Panc1 (cell line): ENCODE measurements at regions of chr7 and their contacts with region 1.

Region 1: DNA sequence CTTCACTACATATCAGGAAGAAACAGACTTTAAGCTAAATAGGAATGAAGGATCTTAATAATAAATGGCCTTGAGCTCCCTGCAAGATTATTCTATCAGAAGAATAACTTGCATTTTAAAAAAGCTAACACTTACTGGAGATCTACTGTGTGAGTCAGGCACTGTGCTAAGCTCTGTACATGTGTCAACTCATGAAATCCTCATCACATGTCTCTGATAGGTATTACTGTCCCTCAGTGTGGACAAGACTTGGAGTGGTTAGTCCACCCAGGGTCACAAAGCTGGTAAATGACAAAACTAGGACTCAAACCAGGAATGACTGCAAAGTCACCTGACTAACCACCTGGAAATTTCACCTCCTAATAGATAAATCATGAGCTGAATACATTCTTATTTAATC is 57.1 kb upstream of the KCTD7 start:
- DNase-seq: no peak
- ATAC-seq: no peak
- H3K4me3 ChIP-seq: no peak overlapping the region
- H3K27ac ChIP-seq: no peak overlapping the region
- H3K4me1 ChIP-seq: no peaks in the 10 kb centered on the region
- H3K27me3 ChIP-seq: no peaks in the 10 kb centered on the region
- CTCF ChIP-seq: no peak

Region 2: DNA sequence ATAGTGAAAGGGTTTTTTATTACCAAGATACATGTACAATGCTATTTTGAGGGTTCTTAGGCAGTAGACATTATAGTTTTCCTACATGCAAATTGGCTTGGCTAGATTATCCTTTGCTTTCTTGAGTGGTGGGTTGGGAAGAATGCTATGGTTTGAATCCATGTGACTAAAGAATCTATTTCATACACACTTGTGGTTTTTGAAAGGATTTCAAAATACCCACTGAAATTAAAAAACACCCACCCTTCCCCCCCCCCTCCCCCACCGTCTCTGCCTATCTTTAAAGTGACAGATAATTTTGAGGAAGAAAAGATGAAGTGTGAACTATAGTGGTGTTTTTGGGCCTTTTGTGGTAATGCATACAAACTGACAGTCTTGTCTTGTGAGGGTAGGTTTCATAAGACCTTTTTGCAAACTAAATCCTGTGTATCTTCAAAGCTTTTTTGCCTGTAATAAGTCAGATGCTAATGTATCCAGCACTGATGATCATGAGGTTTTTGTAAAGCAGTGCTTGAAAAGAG is 275.5 kb before region 1 on chr7:
- CTCF ChIA-PET with region 1: no interaction called
- POLR2A ChIA-PET with region 1: no interaction called
- in situ Hi-C with region 1: no loop called
- intact Hi-C with region 1: no loop called
- DNase-seq: no peak
- ATAC-seq: no peak
- H3K4me3 ChIP-seq: no peak overlapping the region
- H3K27ac ChIP-seq: no peak overlapping the region
- H3K4me1 ChIP-seq: no peaks in the 10 kb centered on the region
- H3K27me3 ChIP-seq: no peaks in the 10 kb centered on the region
- CTCF ChIP-seq: no peak

Region 3: DNA sequence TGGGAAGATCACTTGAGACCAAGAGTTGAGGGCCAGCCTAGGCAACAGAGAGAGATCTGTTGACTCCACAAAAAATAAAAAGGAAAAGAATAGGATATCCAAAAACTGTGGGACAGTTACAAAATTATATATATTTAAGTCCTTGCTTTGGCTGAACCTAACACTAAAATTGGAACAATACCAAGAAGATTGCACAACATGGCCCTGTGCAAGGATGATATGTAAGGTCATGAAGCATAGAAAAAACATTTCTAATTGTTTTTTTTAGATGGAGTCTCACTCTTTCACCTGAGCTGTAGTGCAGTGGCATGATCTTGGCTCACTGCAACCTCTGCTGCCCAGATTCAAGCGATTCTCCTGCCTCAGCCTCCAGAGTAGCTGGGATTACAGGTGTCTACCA is 227.4 kb before region 1 on chr7:
- CTCF ChIA-PET with region 1: no interaction called
- POLR2A ChIA-PET with region 1: no interaction called
- in situ Hi-C with region 1: no loop called
- intact Hi-C with region 1: no loop called
- DNase-seq: no peak
- ATAC-seq: no peak
- H3K4me3 ChIP-seq: no peak overlapping the region
- H3K27ac ChIP-seq: no peak overlapping the region
- H3K4me1 ChIP-seq: no peaks in the 10 kb centered on the region
- H3K27me3 ChIP-seq: no peaks in the 10 kb centered on the region
- CTCF ChIP-seq: no peak

Region 4: GRCh38 chr7:66557608-66558143 is 13.9 kb before region 1 on chr7:
- CTCF ChIA-PET with region 1: interaction called, 9 read pairs
- POLR2A ChIA-PET with region 1: interaction called, 13 read pairs
- in situ Hi-C with region 1: no loop called
- intact Hi-C with region 1: no loop called
- DNase-seq: peak; percentile 27
- ATAC-seq: peak; percentile 87
- H3K4me3 ChIP-seq: no peak overlapping the region
- H3K27ac ChIP-seq: no peak overlapping the region
- H3K4me1 ChIP-seq: peaks cover 11% of the 10 kb centered on the region
- H3K27me3 ChIP-seq: no peaks in the 10 kb centered on the region
- CTCF ChIP-seq: peak; percentile 99

Region 5: GRCh38 chr7:66583490-66584110 is 12.0 kb after region 1 on chr7:
- CTCF ChIA-PET with region 1: no interaction called
- POLR2A ChIA-PET with region 1: no interaction called
- in situ Hi-C with region 1: no loop called
- intact Hi-C with region 1: no loop called
- DNase-seq: no peak
- ATAC-seq: no peak
- H3K4me3 ChIP-seq: no peak overlapping the region
- H3K27ac ChIP-seq: no peak overlapping the region
- H3K4me1 ChIP-seq: peaks cover 2% of the 10 kb centered on the region; the same call in 1 of the 2 replicates
- H3K27me3 ChIP-seq: no peaks in the 10 kb centered on the region
- CTCF ChIP-seq: no peak

Region 6: GRCh38 chr7:66731986-66732385 is 160.4 kb after region 1 on chr7:
- CTCF ChIA-PET with region 1: no interaction called
- POLR2A ChIA-PET with region 1: no interaction called
- in situ Hi-C with region 1: no loop called
- intact Hi-C with region 1: no loop called
- DNase-seq: no peak
- ATAC-seq: peak; percentile 36
- H3K4me3 ChIP-seq: no peak overlapping the region
- H3K27ac ChIP-seq: no peak overlapping the region
- H3K4me1 ChIP-seq: 0 out of 2 replicates have a peak, but pooled peaks cover 2% of the 10 kb centered on the region
- H3K27me3 ChIP-seq: no peaks in the 10 kb centered on the region
- CTCF ChIP-seq: no peak